Gastrocnemius medialis (tissue), 4 donors: ENCODE measurements at regions of chr1 and their contacts with region 1.

Region 1: DNA sequence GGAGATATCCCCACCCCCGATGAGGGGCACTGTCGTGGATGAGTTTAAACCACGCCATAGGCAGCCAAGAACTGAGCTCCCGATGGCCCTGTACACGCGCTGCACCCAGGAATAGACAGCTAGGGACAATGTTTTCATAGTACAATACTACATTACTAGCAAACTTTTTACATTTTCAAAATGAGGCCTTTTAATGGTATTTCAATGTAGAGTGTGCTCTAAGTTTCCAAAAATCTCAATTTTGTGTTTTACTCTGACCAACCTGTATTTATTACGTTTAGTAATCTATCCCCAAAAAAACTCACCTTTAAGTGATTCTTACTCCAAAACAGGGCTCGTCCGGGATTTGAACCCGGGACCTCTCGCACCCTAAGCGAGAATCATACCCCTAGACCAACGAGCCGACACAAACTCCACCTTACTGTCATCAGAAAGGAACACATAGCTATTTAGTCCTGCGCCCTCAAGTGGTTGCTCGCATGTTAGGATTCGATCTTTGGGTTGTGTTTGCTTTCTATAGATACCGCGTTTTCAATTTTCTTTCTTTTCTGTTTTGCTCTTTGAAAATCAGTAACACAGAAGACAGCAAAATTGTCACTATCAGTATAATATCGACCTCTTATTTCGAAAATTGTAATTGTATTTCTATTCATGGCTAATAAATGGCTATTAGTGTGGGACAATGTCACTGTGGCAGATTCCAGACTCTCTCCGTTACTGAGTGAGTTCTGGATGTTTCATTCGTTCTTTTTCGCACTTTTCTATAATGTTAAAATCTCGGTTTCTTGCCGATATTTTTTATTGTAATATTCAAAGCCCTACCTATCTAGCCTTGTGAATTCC is 6.4 kb upstream of the MPZL1 start:
- DNase-seq: peak; percentile 75 to 83
- ATAC-seq: peak; percentile 73 to 82
- H3K4me3 ChIP-seq: peak overlapping the region; percentile 71 to 82 (median 75)
- H3K27ac ChIP-seq: peak overlapping the region; percentile 88 to 97 (median 93)
- H3K4me1 ChIP-seq: peaks cover 0 to 4% of the 10 kb centered on the region in 2 donors
- H3K27me3 ChIP-seq: no peaks in the 10 kb centered on the region
- CTCF ChIP-seq: peak; percentile 70 to 88 (median 82)
- POLR2A ChIP-seq: no peak

Region 2: GRCh38 chr1:167249702-167250101 is 465.7 kb before region 1 on chr1:
- in situ Hi-C with region 1: loop called in 1 of 4 experiments (anchors 25 kb)
- intact Hi-C with region 1: no loop called
- DNase-seq: no peak
- ATAC-seq: no peak
- H3K4me3 ChIP-seq: no peak overlapping the region
- H3K27ac ChIP-seq: no peak overlapping the region
- H3K4me1 ChIP-seq: peaks cover 5 to 35% of the 10 kb centered on the region in 2 donors
- H3K27me3 ChIP-seq: no peaks in the 10 kb centered on the region
- CTCF ChIP-seq: no peak
- POLR2A ChIP-seq: no peak

Region 3: GRCh38 chr1:167697667-167698141 is 17.7 kb before region 1 on chr1:
- in situ Hi-C with region 1: no loop called
- intact Hi-C with region 1: loop called (anchors 2 kb)
- DNase-seq: peak; percentile 94 to 98
- ATAC-seq: peak; percentile 89
- H3K4me3 ChIP-seq: no peak overlapping the region
- H3K27ac ChIP-seq: peak overlapping the region; percentile 83 to 89 (median 86)
- H3K4me1 ChIP-seq: peaks cover 30 to 61% of the 10 kb centered on the region in 2 donors
- H3K27me3 ChIP-seq: no peaks in the 10 kb centered on the region
- CTCF ChIP-seq: no peak
- POLR2A ChIP-seq: peak in 1 of 2 donors; percentile 23

Region 4: GRCh38 chr1:167797015-167797414 is 81.6 kb after region 1 on chr1:
- in situ Hi-C with region 1: loop called in 2 of 4 experiments (anchors 5 kb)
- intact Hi-C with region 1: loop called (anchors 2 kb)
- DNase-seq: peak; percentile 68 to 82
- ATAC-seq: peak; percentile 95 to 97
- H3K4me3 ChIP-seq: no peak overlapping the region
- H3K27ac ChIP-seq: peak overlapping the region; percentile 63 to 77 (median 66)
- H3K4me1 ChIP-seq: peaks cover 19 to 30% of the 10 kb centered on the region in 2 donors
- H3K27me3 ChIP-seq: no peaks in the 10 kb centered on the region
- CTCF ChIP-seq: no peak
- POLR2A ChIP-seq: no peak

Region 5: GRCh38 chr1:167803358-167804207 is 88.2 kb after region 1 on chr1:
- in situ Hi-C with region 1: loop called in 3 of 4 experiments (anchors 5 kb)
- intact Hi-C with region 1: loop called (anchors 2 kb)
- DNase-seq: peak; percentile 78 to 84
- ATAC-seq: peak; percentile 98 to 99
- H3K4me3 ChIP-seq: peak overlapping the region in 1 of 4 donors; percentile 17
- H3K27ac ChIP-seq: no peak overlapping the region
- H3K4me1 ChIP-seq: no peaks in the 10 kb centered on the region
- H3K27me3 ChIP-seq: no peaks in the 10 kb centered on the region
- CTCF ChIP-seq: peak; percentile 73 to 96 (median 87)
- POLR2A ChIP-seq: no peak

Region 6: GRCh38 chr1:167819849-167820683 is 104.7 kb after region 1 on chr1:
- in situ Hi-C with region 1: no loop called
- intact Hi-C with region 1: loop called (anchors 5 kb)
- DNase-seq: peak; percentile 45 to 85
- ATAC-seq: peak; percentile 92 to 93
- H3K4me3 ChIP-seq: peak overlapping the region; percentile 43 to 59 (median 47)
- H3K27ac ChIP-seq: peak overlapping the region; percentile 64 to 82 (median 76)
- H3K4me1 ChIP-seq: peaks cover 0 to 9% of the 10 kb centered on the region in 2 donors
- H3K27me3 ChIP-seq: no peaks in the 10 kb centered on the region
- CTCF ChIP-seq: no peak
- POLR2A ChIP-seq: no peak